GM23248 (cell line): ENCODE measurements at regions of chr5 and their contacts with region 1.

Region 1: GRCh38 chr5:52693280-52693679 is 94.4 kb upstream of the ITGA1 start:
- DNase-seq: peak; percentile 64
- H3K4me3 ChIP-seq: no peak overlapping the region
- H3K27ac ChIP-seq: no peak overlapping the region
- H3K4me1 ChIP-seq: peaks cover 27% of the 10 kb centered on the region
- H3K27me3 ChIP-seq: no peaks in the 10 kb centered on the region

Region 2: DNA sequence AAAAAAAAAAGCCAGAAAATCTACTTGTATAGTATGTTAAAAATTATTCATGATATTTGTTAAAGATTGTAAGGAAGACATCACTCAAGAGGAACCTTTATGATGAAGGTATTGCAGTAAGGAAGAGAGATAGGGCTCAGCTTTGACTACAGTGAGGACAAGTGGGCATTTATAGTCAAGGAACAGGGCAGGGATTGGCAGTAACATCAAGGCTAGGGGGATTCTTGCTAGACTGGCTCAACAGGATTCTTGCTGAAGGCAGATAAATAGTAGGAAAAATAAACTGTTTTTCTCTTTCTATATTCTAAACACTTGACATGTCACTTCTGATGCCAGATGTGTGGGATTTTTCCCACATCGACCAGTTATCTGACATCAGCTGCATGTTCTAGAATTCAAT is 191.2 kb after region 1 on chr5:
- in situ Hi-C with region 1: loop called (anchors 10 kb)
- DNase-seq: no peak
- H3K4me3 ChIP-seq: no peak overlapping the region
- H3K27ac ChIP-seq: no peak overlapping the region
- H3K4me1 ChIP-seq: no peaks in the 10 kb centered on the region
- H3K27me3 ChIP-seq: no peaks in the 10 kb centered on the region